Naive thymus-derived CD4-positive, alpha-beta T cell (primary cell): ENCODE measurements at regions of chr6 and their contacts with region 1.

Region 1: GRCh38 chr6:36594029-36594815 is at the start of gene SRSF3:
- DNase-seq: peak; percentile 87 to 99 (median 97)
- ATAC-seq: peak; percentile 95
- H3K4me3 ChIP-seq: peak within 1 kb of the TSS; percentile 85
- H3K4me3 Mint-ChIP-seq: peak within 1 kb of the TSS; percentile 90 to 99 (median 97)
- H3K27ac ChIP-seq: peak within 1 kb of the TSS; percentile 98
- H3K27ac Mint-ChIP-seq: peak within 1 kb of the TSS; percentile 97 to 100 (median 99)
- H3K4me1 ChIP-seq: peaks cover 23 to 34% of the 10 kb centered on the region in 2 donors
- H3K4me1 Mint-ChIP-seq: peaks cover 23 to 50% (median 39%) of the 10 kb centered on the region in 7 donors
- H3K27me3 ChIP-seq: no peaks in the 10 kb centered on the region
- H3K27me3 Mint-ChIP-seq: peaks cover 0 to 3% (median 0%) of the 10 kb centered on the region in 5 donors
- total RNA-seq, gene SRSF3: 317 to 510 (median 426) TPM

Region 2: DNA sequence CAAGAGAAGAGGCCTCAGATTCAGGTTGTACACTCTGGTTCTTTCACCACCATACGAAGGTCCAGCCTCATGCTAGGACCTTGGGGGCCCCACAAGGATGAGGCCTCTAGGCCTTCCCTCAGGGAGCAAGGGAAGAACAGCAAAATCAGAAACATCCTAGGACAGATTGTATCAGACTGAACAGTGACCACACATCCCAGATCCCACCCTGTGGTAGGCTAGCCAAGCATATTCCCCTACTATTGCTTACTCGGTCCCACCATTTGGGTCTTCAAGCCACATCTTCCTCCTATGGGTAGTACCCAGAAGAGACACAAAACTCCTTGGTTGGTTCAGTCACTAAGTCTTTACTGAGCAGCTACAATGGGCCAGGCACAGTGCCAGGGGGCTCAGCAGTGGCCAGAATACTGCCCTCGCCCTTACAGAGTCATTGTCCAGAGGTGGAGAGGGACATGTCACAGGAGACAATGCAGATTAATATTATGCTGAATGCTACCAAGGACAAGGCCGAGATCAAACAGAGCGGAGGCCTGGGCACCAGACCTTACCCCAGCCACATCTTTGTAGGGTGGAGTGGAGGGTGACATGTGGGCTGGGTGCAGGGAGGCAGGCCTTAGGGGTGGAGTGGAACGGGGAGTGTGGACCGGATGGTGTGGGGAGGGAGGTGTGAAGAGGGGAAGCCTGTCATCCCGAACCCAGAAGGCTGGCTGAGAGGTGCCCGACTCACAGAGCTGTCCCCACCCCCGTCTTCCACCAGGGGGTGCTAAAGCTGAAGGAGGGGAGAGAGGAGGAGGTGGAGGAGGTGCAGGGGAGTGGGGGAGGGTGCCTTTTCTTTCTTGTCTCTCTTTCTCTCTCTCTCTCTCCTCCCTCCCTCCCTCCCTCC is 470.7 kb before region 1 on chr6:
- CTCF ChIA-PET with region 1: no interaction called
- POLR2A ChIA-PET with region 1: no interaction called
- intact Hi-C with region 1: loop called in 1 of 2 experiments (anchors 10 kb)
- DNase-seq: peak; percentile 74 to 96 (median 89)
- ATAC-seq: peak; percentile 83
- H3K4me3 ChIP-seq: peak overlapping the region; percentile 11
- H3K4me3 Mint-ChIP-seq: peak overlapping the region; percentile 36 to 99 (median 60)
- H3K27ac ChIP-seq: peak overlapping the region; percentile 90
- H3K27ac Mint-ChIP-seq: peak overlapping the region; percentile 94 to 100 (median 99)
- H3K4me1 ChIP-seq: peaks cover 64 to 75% of the 10 kb centered on the region in 2 donors
- H3K4me1 Mint-ChIP-seq: peaks cover 63 to 98% (median 87%) of the 10 kb centered on the region in 7 donors
- H3K27me3 ChIP-seq: no peaks in the 10 kb centered on the region
- H3K27me3 Mint-ChIP-seq: no peaks in the 10 kb centered on the region

Region 3: DNA sequence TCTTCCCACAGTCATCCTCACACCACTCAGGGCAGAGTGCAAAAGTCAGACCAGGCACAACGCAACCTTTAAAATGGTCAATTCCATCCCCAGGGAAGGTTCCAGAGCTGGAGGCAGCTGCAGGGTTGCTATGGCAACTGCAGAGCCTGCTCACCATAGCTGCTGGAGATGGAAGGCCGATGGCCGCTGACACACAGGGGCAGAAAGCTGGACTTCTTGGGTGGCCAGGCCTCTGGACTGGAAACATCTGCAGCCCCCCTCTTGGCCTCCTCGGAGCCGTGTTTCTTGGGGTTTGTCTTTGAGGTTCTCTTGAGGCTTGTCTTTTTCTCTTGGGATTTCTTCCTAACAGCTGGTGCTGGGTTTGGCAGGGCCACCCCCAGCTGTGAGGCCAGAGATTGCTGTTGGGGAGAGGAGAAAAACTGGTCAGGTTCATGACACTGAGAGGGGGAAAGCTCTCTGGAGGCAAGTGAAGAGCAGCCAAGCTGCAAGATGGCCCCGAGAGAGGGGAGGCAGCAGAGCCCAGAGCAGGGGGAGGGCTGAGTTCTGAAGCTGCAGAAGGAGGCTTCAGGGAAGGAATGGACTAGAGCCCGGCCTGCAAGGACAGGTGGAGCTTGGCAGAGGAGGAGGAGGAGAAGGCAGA is 267.7 kb before region 1 on chr6:
- CTCF ChIA-PET with region 1: no interaction called
- POLR2A ChIA-PET with region 1: no interaction called
- intact Hi-C with region 1: no loop called
- DNase-seq: no peak
- ATAC-seq: no peak
- H3K4me3 ChIP-seq: no peak overlapping the region
- H3K4me3 Mint-ChIP-seq: no peak overlapping the region
- H3K27ac ChIP-seq: no peak overlapping the region
- H3K27ac Mint-ChIP-seq: no peak overlapping the region
- H3K4me1 ChIP-seq: no peaks in the 10 kb centered on the region
- H3K4me1 Mint-ChIP-seq: peaks cover 0 to 3% (median 0%) of the 10 kb centered on the region in 7 donors
- H3K27me3 ChIP-seq: no peaks in the 10 kb centered on the region
- H3K27me3 Mint-ChIP-seq: peaks cover 0 to 21% (median 0%) of the 10 kb centered on the region in 5 donors

Region 4: DNA sequence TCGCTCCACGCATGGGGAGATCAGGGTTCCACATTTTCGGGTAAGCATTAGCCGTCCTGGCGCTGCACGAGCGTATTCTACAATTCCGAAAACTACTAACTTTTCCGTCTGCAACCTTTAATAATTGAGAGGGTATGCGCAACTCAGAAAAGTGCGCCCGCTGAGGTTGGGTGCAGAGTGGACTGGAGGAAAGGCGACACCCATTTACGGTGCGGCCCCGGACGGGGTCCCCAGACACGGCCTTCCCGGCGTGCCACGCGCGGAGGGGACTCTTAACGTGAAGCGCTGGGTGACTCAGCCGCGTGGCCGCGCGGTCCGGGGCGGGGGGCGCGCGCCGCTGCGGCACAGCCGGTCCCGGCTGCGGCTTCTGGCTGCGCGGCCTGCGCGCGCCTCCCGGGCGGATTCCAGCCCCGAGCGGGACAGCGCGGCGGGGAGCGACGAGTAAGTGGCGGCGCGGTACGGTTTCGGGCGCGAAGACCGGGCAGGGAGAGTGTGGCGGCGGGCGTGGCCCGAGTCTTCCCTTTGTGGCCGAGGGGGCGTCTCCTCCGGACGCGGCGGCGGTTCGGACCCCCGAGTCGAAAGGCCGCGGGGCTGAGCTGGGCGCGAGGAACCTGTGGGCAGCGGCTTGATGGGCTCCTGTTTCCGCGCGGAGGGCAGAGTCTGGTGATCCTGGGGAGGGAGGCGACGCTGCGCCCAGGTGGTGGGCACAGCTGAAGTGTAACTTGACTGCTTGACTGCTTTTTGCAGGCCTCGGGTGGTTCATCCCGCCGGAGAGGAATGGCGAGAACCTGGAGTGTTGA is 151.4 kb before region 1 on chr6 and contains the starts of genes KCTD20 and PXT1:
- CTCF ChIA-PET with region 1: interaction called, 3 read pairs
- POLR2A ChIA-PET with region 1: interaction called, 18 read pairs
- intact Hi-C with region 1: loop called (anchors 1 kb)
- DNase-seq: peak; percentile 78 to 89 (median 83)
- ATAC-seq: peak; percentile 91
- H3K4me3 ChIP-seq: peak within 1 kb of the TSS; percentile 69
- H3K4me3 Mint-ChIP-seq: peak within 1 kb of the TSS; percentile 85 to 99 (median 96)
- H3K27ac ChIP-seq: peak within 1 kb of the TSS; percentile 97
- H3K27ac Mint-ChIP-seq: peak within 1 kb of the TSS; percentile 92 to 99 (median 97)
- H3K4me1 ChIP-seq: peaks cover 20 to 31% of the 10 kb centered on the region in 2 donors
- H3K4me1 Mint-ChIP-seq: peaks cover 28 to 56% (median 50%) of the 10 kb centered on the region in 7 donors
- H3K27me3 ChIP-seq: no peaks in the 10 kb centered on the region
- H3K27me3 Mint-ChIP-seq: no peaks in the 10 kb centered on the region
- total RNA-seq, gene KCTD20: 33.0 to 55.8 (median 33.2) TPM
- total RNA-seq, gene PXT1: 0.15 to 0.64 (median 0.32) TPM

Region 5: DNA sequence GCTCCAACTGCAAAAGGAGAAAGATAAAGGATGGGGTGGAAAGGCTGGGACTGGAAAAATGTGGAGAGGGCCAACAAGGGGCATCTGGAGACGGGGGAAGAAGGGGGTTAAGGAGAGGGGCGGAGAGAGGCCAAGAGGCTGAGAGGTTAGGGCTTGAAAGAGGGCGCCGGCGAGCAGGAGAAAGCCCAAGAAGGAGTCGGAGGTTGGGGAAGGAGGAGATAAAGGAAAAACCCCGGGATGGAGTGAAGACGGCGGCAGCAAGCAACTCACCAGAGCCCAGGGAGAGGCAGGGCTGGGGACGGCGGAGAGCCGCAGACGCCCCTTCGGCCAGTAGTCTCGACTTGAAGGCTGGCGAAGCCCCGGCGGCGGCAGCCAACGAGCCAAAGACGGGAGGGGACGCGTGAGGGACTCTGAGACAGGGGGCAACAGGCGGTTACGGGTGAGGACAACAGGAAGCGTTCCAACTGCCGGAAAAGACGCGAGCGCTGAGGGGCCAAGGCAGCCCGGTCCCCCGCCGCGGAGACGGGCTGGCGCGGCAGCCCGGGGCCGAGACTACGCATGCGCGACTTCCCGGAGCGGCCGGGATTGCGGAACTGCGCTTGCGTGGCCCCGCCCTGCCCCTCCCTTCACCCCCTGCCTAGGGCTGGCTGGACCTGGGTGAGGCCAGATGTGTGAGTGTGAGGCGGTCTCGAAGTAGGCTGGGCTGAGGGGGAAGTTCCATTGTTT is 47.1 kb before region 1 on chr6 and contains the start of gene STK38:
- CTCF ChIA-PET with region 1: interaction called, 6 read pairs
- POLR2A ChIA-PET with region 1: interaction called, 288 read pairs
- intact Hi-C with region 1: loop called (anchors 1 kb)
- DNase-seq: peak; percentile 79 to 93 (median 88)
- ATAC-seq: peak; percentile 90
- H3K4me3 ChIP-seq: peak within 1 kb of the TSS; percentile 98
- H3K4me3 Mint-ChIP-seq: peak within 1 kb of the TSS; percentile 96 to 99 (median 98)
- H3K27ac ChIP-seq: peak within 1 kb of the TSS; percentile 95
- H3K27ac Mint-ChIP-seq: peak within 1 kb of the TSS; percentile 89 to 99 (median 98)
- H3K4me1 ChIP-seq: peaks cover 29 to 38% of the 10 kb centered on the region in 2 donors
- H3K4me1 Mint-ChIP-seq: peaks cover 15 to 59% (median 42%) of the 10 kb centered on the region in 7 donors
- H3K27me3 ChIP-seq: no peaks in the 10 kb centered on the region
- H3K27me3 Mint-ChIP-seq: no peaks in the 10 kb centered on the region
- total RNA-seq, gene STK38: 68.5 to 193 (median 95.0) TPM

Region 6: DNA sequence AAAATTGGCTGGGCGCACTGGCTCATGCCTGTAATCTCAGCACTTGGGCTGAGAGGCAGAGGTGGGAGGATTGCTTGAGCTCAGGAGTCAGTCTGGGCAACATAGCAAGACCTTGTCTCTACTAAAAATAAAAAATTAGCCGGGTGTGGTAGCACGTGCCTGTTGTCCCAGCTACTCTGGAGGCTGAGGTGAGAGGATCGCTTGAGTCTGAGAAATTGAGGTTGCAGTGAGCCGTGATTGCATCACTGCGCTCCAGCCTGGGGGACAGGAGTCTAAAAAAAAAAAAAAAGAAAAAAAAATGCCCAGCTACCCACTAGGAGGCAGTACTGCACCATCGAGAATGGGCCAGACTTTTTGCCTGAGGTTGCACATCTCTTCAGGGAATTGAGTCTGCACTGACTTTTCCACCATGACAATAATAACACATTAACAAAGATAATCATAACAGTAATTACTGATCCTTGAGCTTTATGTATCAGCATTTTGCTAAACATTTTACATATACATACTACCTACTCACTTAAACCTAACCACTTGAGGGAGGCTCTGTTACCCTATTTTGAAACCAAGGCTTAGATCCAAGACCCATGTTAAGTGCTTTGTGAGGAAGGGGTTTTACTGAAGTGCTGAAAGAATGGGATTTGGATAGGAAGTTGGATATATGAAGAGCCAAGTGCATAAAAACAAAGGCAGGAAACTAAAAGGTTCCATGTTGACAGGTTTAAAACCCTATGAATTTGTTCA is 21.0 kb after region 1 on chr6:
- CTCF ChIA-PET with region 1: interaction called, 8 read pairs
- POLR2A ChIA-PET with region 1: interaction called, 53 read pairs
- intact Hi-C with region 1: loop called in 1 of 2 experiments (anchors 2 kb)
- DNase-seq: peak in 8 of 9 donors; percentile 21 to 62 (median 50)
- ATAC-seq: peak; percentile 83
- H3K4me3 ChIP-seq: no peak overlapping the region
- H3K4me3 Mint-ChIP-seq: no peak overlapping the region
- H3K27ac ChIP-seq: no peak overlapping the region
- H3K27ac Mint-ChIP-seq: peak overlapping the region in 7 of 9 donors; percentile 14 to 78 (median 60)
- H3K4me1 ChIP-seq: no peaks in the 10 kb centered on the region
- H3K4me1 Mint-ChIP-seq: peaks cover 7 to 26% (median 18%) of the 10 kb centered on the region in 7 donors
- H3K27me3 ChIP-seq: no peaks in the 10 kb centered on the region
- H3K27me3 Mint-ChIP-seq: no peaks in the 10 kb centered on the region

Region 7: GRCh38 chr6:36809941-36810803 is 215.9 kb after region 1 on chr6:
- CTCF ChIA-PET with region 1: no interaction called
- POLR2A ChIA-PET with region 1: no interaction called
- intact Hi-C with region 1: no loop called
- DNase-seq: no peak
- ATAC-seq: no peak
- H3K4me3 ChIP-seq: no peak overlapping the region
- H3K4me3 Mint-ChIP-seq: no peak overlapping the region
- H3K27ac ChIP-seq: no peak overlapping the region
- H3K27ac Mint-ChIP-seq: no peak overlapping the region
- H3K4me1 ChIP-seq: no peaks in the 10 kb centered on the region
- H3K4me1 Mint-ChIP-seq: peaks cover 0 to 3% (median 0%) of the 10 kb centered on the region in 7 donors
- H3K27me3 ChIP-seq: no peaks in the 10 kb centered on the region
- H3K27me3 Mint-ChIP-seq: peaks cover 0 to 21% (median 5%) of the 10 kb centered on the region in 5 donors

Region 8: GRCh38 chr6:36985808-36986703 is 391.8 kb after region 1 on chr6 and contains the start of gene MTCH1:
- CTCF ChIA-PET with region 1: no interaction called
- POLR2A ChIA-PET with region 1: interaction called, 4 read pairs
- intact Hi-C with region 1: loop called (anchors 1 kb)
- DNase-seq: peak; percentile 85 to 98 (median 92)
- ATAC-seq: peak; percentile 93
- H3K4me3 ChIP-seq: peak within 1 kb of the TSS; percentile 98
- H3K4me3 Mint-ChIP-seq: peak within 1 kb of the TSS in 6 of 10 donors; percentile 98 to 100 (median 100)
- H3K27ac ChIP-seq: peak within 1 kb of the TSS; percentile 96
- H3K27ac Mint-ChIP-seq: peak within 1 kb of the TSS in 7 of 9 donors; percentile 98 to 99 (median 99)
- H3K4me1 ChIP-seq: peaks cover 22 to 27% of the 10 kb centered on the region in 2 donors
- H3K4me1 Mint-ChIP-seq: peaks cover 12 to 26% (median 18%) of the 10 kb centered on the region in 7 donors
- H3K27me3 ChIP-seq: no peaks in the 10 kb centered on the region
- H3K27me3 Mint-ChIP-seq: peaks cover 0 to 17% (median 0%) of the 10 kb centered on the region in 5 donors
- total RNA-seq, gene MTCH1: 123 to 198 (median 130) TPM